AG04450 (cell line): ENCODE measurements at regions of chr2 and their contacts with region 1.

Region 1: GRCh38 chr2:199973703-199974102 is 18.3 kb downstream of the MAIP1 start:
- DNase-seq: no peak
- H3K4me3 ChIP-seq: no peak overlapping the region
- H3K27ac ChIP-seq: no peak overlapping the region
- H3K27me3 ChIP-seq: no peaks in the 10 kb centered on the region
- CTCF ChIP-seq: peak; percentile 60

Region 2: DNA sequence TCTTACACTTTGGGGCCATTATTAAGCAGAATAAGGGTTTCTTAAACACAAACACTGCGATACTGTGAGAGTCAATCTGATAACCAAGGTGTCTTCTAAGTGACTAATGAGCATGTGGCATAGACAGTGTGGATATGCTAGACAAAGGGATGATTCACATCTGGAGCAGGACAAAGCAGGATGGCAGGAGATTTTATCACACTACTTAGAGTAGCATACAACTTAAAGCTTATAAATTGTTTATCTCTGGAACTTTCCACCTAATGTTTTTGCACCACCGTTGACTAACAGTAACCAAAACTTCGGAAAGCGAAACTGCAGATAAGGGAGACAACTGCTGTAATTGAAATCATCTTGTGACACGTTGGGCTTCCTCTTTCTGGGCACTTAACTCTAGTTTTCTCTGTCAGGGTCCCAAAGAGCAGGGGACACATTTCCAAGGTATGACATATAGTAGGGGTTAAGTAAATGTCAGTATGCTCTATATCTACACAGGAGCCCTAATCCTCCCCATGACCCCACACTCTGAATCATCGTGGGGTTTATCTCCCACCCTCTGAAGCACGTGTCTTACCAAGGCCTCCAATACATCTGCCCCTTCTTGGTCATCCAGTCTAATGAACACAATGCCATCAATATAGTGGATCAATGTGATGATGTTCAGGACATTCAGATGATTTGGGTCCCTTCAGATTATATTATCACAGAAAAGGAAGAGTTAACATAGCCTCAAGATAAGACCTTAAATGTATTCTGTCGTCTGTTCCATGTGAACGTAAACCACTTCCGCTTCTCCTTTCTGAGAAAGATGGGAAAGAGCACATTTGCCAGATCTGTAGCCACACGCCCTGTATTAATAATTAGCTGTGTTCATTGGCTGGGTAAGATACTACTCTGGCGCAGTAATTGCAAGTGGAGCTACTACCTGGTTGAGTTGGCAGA is 201.4 kb before region 1 on chr2:
- CTCF ChIA-PET with region 1: no interaction called
- POLR2A ChIA-PET with region 1: no interaction called
- DNase-seq: no peak
- H3K4me3 ChIP-seq: no peak overlapping the region
- H3K27ac ChIP-seq: no peak overlapping the region
- H3K27me3 ChIP-seq: no peaks in the 10 kb centered on the region
- CTCF ChIP-seq: no peak

Region 3: GRCh38 chr2:199940373-199940772 is 33.3 kb before region 1 on chr2:
- CTCF ChIA-PET with region 1: no interaction called
- POLR2A ChIA-PET with region 1: no interaction called
- DNase-seq: no peak
- H3K4me3 ChIP-seq: no peak overlapping the region
- H3K27ac ChIP-seq: no peak overlapping the region
- H3K27me3 ChIP-seq: no peaks in the 10 kb centered on the region
- CTCF ChIP-seq: peak; percentile 42

Region 4: GRCh38 chr2:199962203-199962602 is 11.5 kb before region 1 on chr2:
- CTCF ChIA-PET with region 1: interaction called, 10 read pairs
- POLR2A ChIA-PET with region 1: no interaction called
- DNase-seq: no peak
- H3K4me3 ChIP-seq: no peak overlapping the region
- H3K27ac ChIP-seq: no peak overlapping the region
- H3K27me3 ChIP-seq: no peaks in the 10 kb centered on the region
- CTCF ChIP-seq: no peak

Region 5: DNA sequence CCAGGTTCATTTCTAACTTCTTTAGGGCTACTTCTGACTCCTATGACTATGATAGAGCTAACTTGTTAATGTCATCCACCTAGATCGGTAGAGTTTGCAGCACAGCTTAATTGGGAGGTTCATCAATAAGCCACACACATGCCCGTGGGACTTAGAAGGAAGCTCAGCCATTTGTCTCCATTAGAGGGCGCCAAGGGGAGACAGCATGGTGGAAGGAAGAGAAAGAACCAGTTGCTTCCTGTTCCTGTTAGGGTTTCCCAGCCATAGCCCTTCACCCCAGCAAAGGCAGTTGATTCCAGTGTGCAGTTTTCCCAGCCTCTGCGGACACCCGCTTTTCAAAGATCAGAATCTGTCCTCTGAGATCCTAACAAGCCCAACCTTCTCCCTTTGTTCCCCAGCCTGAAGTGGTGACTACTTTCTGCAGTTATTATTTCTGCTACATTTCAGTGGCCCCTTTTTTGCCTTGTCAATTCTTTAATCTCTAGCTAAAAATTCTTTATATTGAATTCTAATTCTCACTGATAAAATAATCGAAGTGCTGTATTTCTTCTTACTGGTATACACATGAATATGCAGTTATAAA is 12.0 kb after region 1 on chr2:
- CTCF ChIA-PET with region 1: interaction called, 18 read pairs
- POLR2A ChIA-PET with region 1: no interaction called
- DNase-seq: peak; percentile 34
- H3K4me3 ChIP-seq: no peak overlapping the region
- H3K27ac ChIP-seq: no peak overlapping the region
- H3K27me3 ChIP-seq: no peaks in the 10 kb centered on the region
- CTCF ChIP-seq: peak; percentile 74

Region 6: GRCh38 chr2:200483729-200484198 is 510.1 kb after region 1 on chr2:
- CTCF ChIA-PET with region 1: interaction called, 69 read pairs
- POLR2A ChIA-PET with region 1: no interaction called
- DNase-seq: no peak
- H3K4me3 ChIP-seq: no peak overlapping the region
- H3K27ac ChIP-seq: no peak overlapping the region
- H3K27me3 ChIP-seq: no peaks in the 10 kb centered on the region
- CTCF ChIP-seq: peak; percentile 54

Region 7: DNA sequence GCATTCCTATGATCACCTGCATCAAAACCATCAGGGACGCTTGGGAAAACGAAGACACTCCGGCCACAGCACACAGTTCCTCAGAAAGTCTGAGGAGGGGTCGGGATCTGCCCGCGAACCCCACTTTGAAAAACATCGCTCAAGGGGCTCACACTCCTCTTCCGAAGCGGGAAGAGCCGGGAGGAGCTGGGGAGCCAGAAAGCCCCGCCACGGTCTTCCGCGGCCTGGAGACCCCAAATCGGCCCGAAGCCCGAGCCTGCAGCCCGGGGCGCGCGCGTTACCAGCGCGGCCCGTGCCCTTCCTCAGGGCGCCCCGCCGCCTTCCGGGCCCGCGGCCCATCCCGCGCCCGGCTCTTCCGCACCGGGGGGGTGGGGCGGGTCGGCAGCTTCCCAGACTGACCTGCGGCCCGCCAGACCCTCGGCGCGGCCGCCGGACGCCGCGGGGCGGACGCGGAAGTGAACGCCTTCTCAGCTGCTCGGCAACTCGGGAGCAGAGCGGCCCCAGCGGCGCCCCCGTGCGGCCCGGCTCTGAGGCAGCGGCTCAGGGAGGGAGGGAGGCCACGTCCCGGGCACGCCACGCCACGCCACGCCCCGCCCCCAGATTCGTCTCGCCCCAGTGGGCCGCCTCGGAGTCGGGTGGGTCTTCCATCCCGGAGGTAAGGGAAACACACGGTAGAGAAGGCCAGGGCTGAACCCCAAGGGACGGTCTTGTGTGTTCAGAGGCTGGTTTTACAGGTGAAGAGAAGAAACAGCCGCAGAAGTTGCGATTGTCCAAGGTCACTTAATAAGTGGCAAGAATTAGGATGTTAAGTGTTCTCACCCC is 536.1 kb after region 1 on chr2 and contains the start of gene KCTD18:
- CTCF ChIA-PET with region 1: interaction called, 13 read pairs
- POLR2A ChIA-PET with region 1: no interaction called
- DNase-seq: peak; percentile 33
- H3K4me3 ChIP-seq: peak within 1 kb of the TSS; percentile 76
- H3K27ac ChIP-seq: peak within 1 kb of the TSS; percentile 42
- H3K27me3 ChIP-seq: peaks cover 8% of the 10 kb centered on the region
- CTCF ChIP-seq: peak; percentile 70
- polyA plus RNA-seq, gene KCTD18: 9.9 and 13.8 TPM in 2 replicates